ENCODE measurements at regions of chr17 and their contacts with region 1.

Region 1: DNA sequence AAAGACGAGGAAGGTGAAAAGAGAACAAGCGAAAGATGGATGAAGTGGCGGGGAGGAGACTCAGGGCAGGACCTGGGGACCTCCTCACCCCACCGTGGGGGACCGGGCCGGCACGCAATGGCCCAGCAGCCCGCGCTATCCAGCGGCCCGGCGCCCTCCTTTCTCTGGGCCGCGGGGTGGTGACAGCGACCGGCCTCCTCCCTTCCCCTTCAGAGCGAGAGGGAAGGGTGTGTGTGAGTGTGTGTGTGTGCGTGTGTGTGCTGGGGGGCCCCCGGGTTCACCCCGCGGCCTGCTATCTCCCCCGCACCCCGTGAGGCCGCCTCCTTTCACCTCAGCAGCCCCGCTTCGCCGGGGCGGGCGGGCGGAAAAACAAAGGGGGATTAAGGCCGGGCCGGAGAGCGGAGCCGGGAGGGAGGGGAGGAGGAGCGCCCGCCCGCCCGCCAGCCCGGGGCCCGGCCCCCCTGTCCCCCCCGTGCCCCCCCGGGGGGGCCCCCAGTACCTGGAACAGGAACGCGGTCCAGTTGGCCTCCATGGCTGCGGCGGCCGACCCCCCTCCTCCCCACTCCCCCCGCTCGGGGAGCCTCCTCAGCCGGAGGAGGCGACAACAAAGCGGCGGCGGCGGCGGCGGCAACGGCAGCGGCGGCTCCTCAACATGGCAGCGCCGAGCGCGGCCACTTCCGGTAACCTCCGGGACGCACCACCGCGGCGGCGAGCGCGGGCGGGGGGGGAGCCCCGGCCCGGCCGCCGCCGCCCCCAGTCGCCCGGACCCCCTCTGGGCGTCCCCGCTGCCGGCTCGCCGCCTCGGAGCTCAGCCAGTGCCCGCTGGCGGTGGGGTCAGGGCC is at the start of gene VEZF1:
- H3K4me3 ChIP-seq: peak within 1 kb of the TSS; percentile 89
- H3K27ac ChIP-seq: peak within 1 kb of the TSS; percentile 97
- H3K4me1 ChIP-seq: peaks cover 33% of the 10 kb centered on the region
- CTCF ChIP-seq: no peak

Region 2: DNA sequence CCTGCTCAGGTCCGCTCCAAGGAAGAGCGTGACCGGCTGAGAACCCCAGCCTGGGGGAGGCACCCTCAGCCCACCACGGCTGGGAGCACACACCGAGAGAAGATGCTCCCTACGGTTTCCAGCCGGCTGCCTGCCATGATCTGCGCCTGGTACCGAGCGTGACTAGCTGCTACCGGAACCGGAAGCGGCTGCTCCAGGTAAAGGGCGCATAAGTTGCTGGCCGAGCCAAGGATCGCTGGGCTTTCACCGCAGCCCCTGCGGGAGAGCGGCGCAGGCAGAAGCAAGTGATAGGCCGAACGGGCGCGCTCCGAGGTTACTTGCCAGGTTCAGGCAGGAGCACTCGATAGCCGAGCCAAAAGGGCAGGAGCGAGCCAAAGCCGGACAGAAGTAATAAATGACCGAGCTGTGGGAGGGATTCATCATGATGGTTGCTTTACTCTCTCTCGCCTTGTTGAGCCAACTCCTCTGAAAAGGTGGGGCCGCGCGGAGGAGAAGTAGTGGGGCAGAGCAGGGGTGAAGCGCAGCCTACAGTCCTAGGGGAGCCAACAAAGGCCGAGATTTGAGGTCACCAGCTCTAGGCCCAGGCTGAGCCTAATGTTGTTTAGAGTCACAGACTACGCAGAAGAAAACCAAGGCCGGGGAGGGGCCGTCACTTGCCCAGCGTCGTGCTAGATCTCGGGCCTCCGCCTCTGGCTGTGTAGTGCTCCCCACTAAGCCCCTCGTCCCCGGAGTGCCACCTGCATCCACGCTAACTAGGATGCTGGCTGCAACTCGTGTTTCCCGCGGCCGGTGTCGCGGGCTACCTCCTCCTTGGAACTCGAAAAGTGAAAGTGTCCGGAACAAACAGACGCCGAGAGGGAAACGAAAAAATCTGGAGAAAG is 137.7 kb before region 1 on chr17 and contains the start of gene MRPS23:
- CTCF ChIA-PET with region 1: interaction called, 434 read pairs
- POLR2A ChIA-PET with region 1: interaction called, 30 read pairs
- H3K4me3 ChIP-seq: peak within 1 kb of the TSS; percentile 99
- H3K27ac ChIP-seq: peak within 1 kb of the TSS; percentile 84
- H3K4me1 ChIP-seq: peaks cover 17% of the 10 kb centered on the region
- CTCF ChIP-seq: no peak

Region 3: DNA sequence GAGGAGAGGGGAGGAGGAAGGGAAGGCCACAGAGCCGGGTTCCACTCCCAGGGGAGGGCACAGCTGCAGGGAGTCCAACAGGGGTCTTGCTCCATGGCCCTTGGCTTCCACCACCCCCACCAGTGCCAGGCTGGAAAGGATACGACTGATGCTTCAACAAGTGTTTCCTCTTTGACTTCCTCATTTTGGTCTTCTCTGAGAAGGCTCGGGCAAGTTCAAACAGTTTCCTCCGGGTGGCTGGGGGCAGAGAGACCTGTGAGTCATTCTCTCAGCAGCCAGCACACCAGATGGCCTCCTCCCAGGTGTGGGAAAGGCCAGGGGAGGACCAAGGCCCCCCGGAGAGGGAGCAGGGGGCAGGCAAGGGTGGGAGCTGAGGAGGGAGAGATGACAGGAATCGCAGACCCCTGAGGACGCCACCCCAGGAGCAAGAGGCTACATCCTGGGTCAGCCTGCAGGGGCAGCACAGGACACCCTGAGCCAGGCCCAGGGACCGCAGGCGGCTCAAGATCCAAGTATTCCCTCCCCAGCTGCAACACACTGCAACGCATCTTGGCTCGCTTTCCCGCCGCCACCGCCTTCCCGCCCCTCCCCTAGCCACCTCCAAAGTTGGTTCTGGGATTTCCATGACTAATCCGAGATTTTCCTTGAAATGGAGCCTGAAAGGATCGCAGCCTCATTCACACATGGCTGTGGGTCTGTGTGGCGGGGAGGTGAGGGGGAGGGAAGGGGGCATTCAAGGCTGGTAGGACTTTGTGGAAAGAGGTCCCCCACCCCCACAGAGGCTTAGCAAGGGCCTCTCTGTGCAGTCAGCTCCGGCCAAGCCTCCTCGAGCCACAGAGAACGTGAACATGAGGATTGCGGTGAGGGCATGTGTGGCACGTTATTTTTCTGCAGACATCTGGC is 119.5 kb before region 1 on chr17:
- CTCF ChIA-PET with region 1: interaction called, 434 read pairs
- POLR2A ChIA-PET with region 1: interaction called, 5 read pairs
- H3K4me3 ChIP-seq: no peak overlapping the region
- H3K27ac ChIP-seq: peak overlapping the region; percentile 64
- H3K4me1 ChIP-seq: peaks cover 6% of the 10 kb centered on the region; the same call in 1 of the 2 replicates
- CTCF ChIP-seq: peak; percentile 12; the same call in 1 of the 2 replicates

Region 4: DNA sequence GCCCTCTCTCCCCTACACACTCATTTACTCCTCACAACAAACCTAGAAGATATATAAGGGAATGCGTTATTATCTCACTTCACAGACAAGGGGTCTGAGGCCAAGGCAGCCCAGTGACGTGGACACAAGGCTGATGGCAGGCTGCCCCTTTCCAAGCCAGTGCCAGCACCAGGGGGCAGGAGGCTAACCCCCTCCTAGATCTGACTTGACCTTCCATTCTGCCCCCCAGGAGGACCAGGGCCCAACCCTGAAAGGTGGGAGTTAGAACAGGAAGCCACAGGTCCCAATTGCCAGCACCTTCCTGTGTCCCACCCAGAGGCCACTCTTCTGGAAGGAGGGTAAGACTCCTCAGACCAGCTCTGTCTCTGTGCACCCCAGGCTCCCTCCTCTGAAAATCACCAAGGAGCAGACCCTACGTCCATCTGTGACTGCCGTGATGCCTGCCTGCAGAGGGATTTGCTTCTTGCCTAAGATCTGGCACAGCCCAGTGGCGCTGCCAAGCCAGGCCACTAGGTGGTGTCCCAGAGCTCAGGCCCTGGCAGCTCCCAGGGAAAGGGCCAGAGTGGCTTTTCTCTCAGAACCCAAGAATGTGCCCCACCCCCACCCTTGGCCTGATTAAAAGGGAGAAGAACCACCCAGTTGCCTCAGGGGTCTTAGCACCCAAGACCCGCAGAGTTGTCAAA is 95.5 kb before region 1 on chr17:
- CTCF ChIA-PET with region 1: interaction called, 36 read pairs
- POLR2A ChIA-PET with region 1: interaction called, 7 read pairs
- H3K4me3 ChIP-seq: no peak overlapping the region
- H3K27ac ChIP-seq: no peak overlapping the region
- H3K4me1 ChIP-seq: peaks cover 6% of the 10 kb centered on the region
- CTCF ChIP-seq: peak; percentile 92

Region 5: GRCh38 chr17:57955183-57955931 is 32.4 kb before region 1 on chr17 and contains the start of gene CUEDC1:
- CTCF ChIA-PET with region 1: interaction called, 16 read pairs
- POLR2A ChIA-PET with region 1: interaction called, 17 read pairs
- H3K4me3 ChIP-seq: peak within 1 kb of the TSS; percentile 52
- H3K27ac ChIP-seq: peak within 1 kb of the TSS; percentile 98
- H3K4me1 ChIP-seq: peaks cover 40% of the 10 kb centered on the region
- CTCF ChIP-seq: no peak